ENCODE measurements at regions of chr5 and their contacts with region 1.

Region 1: GRCh38 chr5:133051580-133052332 is at the start of gene HSPA4:
- DNase-seq: peak; percentile 99
- H3K4me3 Mint-ChIP-seq: peak within 1 kb of the TSS; percentile 89
- H3K27ac Mint-ChIP-seq: peak within 1 kb of the TSS; percentile 96
- H3K4me1 Mint-ChIP-seq: peaks cover 39% of the 10 kb centered on the region
- H3K27me3 Mint-ChIP-seq: no peaks in the 10 kb centered on the region
- total RNA-seq, gene HSPA4: 221 to 236 TPM

Region 2: DNA sequence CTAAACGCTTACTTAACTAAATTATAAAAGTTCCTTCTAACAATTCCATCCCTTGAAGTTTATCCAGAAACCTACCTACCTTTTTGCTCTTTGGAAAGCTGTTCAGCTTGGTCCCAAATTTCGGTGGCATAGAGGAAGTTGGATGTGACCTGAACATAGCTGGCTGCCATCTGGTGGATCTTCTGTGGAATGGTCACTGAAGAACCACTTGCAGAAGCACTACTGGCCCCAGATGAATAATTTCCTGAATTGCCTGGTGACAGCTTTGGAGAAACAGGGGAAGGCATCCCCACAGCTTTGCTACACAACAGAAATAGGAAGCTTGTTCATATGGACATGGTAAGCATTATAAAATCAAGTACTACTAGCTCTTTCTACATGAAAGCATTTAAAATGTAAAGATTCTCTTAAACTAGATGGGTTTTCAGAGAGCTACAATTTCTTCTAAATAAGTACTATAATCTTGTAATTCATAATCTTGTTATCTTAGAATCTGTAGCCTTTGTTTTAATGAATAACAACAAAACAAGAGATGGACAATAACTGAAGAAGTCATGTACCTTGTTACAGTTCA is 168.4 kb before region 1 on chr5:
- CTCF ChIA-PET with region 1: no interaction called
- POLR2A ChIA-PET with region 1: no interaction called
- intact Hi-C with region 1: no loop called
- DNase-seq: peak; percentile 38
- H3K4me3 Mint-ChIP-seq: no peak overlapping the region
- H3K27ac Mint-ChIP-seq: no peak overlapping the region
- H3K4me1 Mint-ChIP-seq: peaks cover 3% of the 10 kb centered on the region
- H3K27me3 Mint-ChIP-seq: no peaks in the 10 kb centered on the region

Region 3: GRCh38 chr5:132963175-132964104 is 88.3 kb before region 1 on chr5 and contains the start of gene AFF4:
- CTCF ChIA-PET with region 1: interaction called, 3 read pairs
- POLR2A ChIA-PET with region 1: interaction called, 27 read pairs
- intact Hi-C with region 1: loop called (anchors 1 kb)
- DNase-seq: peak; percentile 93
- H3K4me3 Mint-ChIP-seq: peak within 1 kb of the TSS; percentile 93
- H3K27ac Mint-ChIP-seq: peak within 1 kb of the TSS; percentile 98
- H3K4me1 Mint-ChIP-seq: peaks cover 29% of the 10 kb centered on the region
- H3K27me3 Mint-ChIP-seq: no peaks in the 10 kb centered on the region
- total RNA-seq, gene AFF4: 21.9 to 22.1 TPM

Region 4: DNA sequence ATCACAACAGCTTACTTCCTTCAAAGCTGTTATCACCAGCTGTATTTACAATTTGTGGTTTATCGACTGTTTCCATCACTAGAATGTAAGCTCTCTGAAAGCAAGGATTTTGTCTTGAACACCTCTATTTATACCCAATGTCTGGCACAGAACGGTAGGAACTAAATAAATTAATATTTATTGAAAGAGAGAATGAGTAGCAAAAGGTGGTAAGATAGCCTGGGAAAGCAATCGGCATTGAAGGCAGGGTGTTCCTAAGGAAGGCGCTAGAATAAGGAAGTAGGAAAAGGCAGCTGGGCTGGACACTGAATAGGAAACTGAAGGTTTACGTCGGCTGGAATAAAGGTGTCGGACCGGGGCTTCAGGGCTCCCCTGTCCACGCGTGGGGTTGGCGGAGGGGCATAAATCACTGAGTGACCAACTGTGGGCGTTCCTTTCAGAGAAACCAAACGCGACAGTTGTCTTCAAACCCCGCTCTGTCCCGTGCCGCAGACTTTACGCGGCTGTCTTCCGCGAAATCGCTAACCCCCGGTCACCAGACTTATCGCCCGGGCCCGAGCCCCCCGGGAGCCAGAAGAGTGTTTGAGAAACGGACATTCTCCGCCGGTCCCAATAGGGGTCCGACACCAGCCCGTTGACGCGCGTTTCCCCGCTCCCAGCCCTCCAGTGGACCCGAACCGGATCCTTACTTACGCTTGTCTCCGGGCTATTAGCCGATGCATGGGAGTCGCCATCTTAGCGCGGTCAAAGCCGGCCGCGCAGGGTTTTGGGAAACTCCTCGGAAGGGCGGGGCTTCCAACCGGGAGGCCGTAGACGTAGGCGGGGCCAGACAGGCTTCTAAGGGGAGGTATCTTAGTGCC is 25.7 kb before region 1 on chr5 and contains the start of gene ZCCHC10:
- CTCF ChIA-PET with region 1: interaction called, 3 read pairs
- POLR2A ChIA-PET with region 1: interaction called, 21 read pairs
- intact Hi-C with region 1: loop called (anchors 1 kb)
- DNase-seq: peak; percentile 95
- H3K4me3 Mint-ChIP-seq: peak within 1 kb of the TSS; percentile 79
- H3K27ac Mint-ChIP-seq: peak within 1 kb of the TSS; percentile 83
- H3K4me1 Mint-ChIP-seq: peaks cover 15% of the 10 kb centered on the region
- H3K27me3 Mint-ChIP-seq: no peaks in the 10 kb centered on the region
- total RNA-seq, gene ZCCHC10: 22.6 to 25.5 TPM

Region 5: GRCh38 chr5:133189911-133190310 is 138.2 kb after region 1 on chr5:
- CTCF ChIA-PET with region 1: no interaction called
- POLR2A ChIA-PET with region 1: no interaction called
- intact Hi-C with region 1: no loop called
- DNase-seq: no peak
- H3K4me3 Mint-ChIP-seq: no peak overlapping the region
- H3K27ac Mint-ChIP-seq: no peak overlapping the region
- H3K4me1 Mint-ChIP-seq: no peaks in the 10 kb centered on the region
- H3K27me3 Mint-ChIP-seq: no peaks in the 10 kb centered on the region

Measured in activated CD4-positive, alpha-beta memory T cell treated with anti-CD3 and anti-CD28 coated beads for 36 hours (primary cell).